Left ventricle myocardium inferior (tissue), 1 donor: ENCODE measurements at regions of chr20 and their contacts with region 1.

Region 1: DNA sequence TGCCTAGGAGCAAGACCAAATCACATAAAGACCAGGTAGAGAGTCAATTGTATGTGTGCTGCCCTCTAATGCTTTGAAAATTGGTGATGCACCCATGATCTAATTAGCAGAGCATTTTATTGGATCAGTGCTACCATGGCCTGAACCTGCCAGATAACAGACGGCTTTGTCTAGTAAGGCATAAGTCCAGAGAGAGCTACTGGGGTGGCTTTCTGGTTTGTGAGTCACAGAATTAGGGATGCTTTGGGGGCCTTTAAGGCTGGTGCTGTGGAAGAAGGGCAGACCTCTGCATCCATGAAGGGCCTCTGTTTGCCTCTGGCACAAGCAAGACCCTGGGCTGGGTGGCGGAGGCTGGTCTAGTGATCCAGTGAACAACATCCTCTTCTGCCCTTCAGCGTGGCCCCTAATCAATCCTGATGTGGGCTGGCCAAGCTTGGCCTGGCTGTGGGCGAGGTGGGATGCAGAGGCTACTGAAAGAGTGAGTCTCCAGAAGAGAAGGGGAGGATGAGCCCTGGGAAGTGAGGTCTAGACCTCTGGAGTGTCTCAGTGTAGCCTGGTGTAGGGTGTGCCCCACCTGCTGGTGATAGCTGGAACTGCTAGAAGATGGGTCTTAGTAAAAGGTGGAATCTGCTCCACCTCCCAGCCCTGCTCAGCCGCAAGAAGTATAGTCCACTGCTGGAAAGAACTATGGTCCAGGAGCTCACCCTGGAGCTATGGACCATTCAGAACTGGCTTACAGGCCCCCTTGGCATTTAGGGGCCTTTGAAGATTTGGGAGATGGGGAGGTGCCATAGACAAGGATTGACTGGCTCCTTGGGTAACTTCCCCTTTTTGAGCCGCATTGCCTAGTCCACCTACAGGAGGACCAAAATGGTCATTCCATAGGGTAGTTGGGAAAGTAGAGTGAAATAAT is 36.7 kb upstream of the AAR2 start:
- DNase-seq: peak; percentile 75
- H3K4me3 ChIP-seq: no peak overlapping the region
- H3K27ac ChIP-seq: no peak overlapping the region
- H3K4me1 ChIP-seq: peaks cover 6% of the 10 kb centered on the region
- H3K27me3 ChIP-seq: no peaks in the 10 kb centered on the region
- CTCF ChIP-seq: peak; percentile 93

Region 2: GRCh38 chr20:36102809-36103596 is 96.6 kb before region 1 on chr20:
- intact Hi-C with region 1: no loop called
- DNase-seq: no peak
- H3K4me3 ChIP-seq: no peak overlapping the region
- H3K27ac ChIP-seq: no peak overlapping the region
- H3K4me1 ChIP-seq: peaks cover 21% of the 10 kb centered on the region
- H3K27me3 ChIP-seq: no peaks in the 10 kb centered on the region
- CTCF ChIP-seq: no peak

Region 3: GRCh38 chr20:36154700-36155628 is 44.6 kb before region 1 on chr20 and contains the start of gene EPB41L1:
- intact Hi-C with region 1: loop called (anchors 5 kb)
- DNase-seq: no peak
- H3K4me3 ChIP-seq: peak within 1 kb of the TSS; percentile 77
- H3K27ac ChIP-seq: peak within 1 kb of the TSS; percentile 87
- H3K4me1 ChIP-seq: peaks cover 53% of the 10 kb centered on the region
- H3K27me3 ChIP-seq: no peaks in the 10 kb centered on the region
- CTCF ChIP-seq: no peak
- total RNA-seq, gene EPB41L1: 14.6 TPM

Region 4: DNA sequence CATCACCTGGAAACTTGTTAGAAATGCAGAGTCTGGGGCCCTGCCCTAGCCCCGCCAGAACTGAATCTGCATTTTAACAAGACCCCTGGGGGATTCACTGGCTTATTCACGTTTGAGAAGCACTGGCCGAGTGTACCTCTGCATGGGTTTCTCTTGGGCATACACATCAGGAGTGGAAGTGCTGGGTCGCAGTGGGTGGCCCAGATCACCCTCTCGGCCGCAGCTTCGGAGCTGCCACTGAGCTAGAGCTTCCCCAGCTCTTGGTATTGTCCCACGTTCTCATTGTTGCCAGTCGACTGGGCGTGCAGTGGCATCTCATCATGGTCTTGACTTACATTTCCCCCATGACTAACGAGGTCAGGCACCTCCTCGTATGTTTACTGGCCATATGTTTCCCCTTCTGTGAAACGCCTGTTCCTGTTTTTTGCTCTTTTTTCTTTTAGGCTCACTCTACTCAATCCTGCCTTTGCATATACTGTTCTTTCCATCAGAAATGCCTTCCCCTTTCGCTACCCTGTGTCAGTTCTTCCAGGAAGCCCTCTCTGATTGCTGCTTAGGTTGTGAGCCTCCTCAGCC is 103.5 kb after region 1 on chr20:
- intact Hi-C with region 1: no loop called
- DNase-seq: no peak
- H3K4me3 ChIP-seq: no peak overlapping the region
- H3K27ac ChIP-seq: no peak overlapping the region
- H3K4me1 ChIP-seq: peaks cover 13% of the 10 kb centered on the region
- H3K27me3 ChIP-seq: peaks cover 100% of the 10 kb centered on the region
- CTCF ChIP-seq: no peak